Left ventricle myocardium inferior (tissue), 1 donor: ENCODE measurements at regions of chr6 and their contacts with region 1.

Region 1: GRCh38 chr6:13538084-13538483 is 36.3 kb upstream of the SIRT5 start:
- DNase-seq: no peak
- H3K4me3 ChIP-seq: no peak overlapping the region
- H3K27ac ChIP-seq: peak overlapping the region; percentile 65
- H3K4me1 ChIP-seq: peaks cover 24% of the 10 kb centered on the region
- H3K27me3 ChIP-seq: no peaks in the 10 kb centered on the region
- CTCF ChIP-seq: peak; percentile 66

Region 2: GRCh38 chr6:12595161-12595811 is 942.8 kb before region 1 on chr6:
- intact Hi-C with region 1: no loop called
- DNase-seq: no peak
- H3K4me3 ChIP-seq: no peak overlapping the region
- H3K27ac ChIP-seq: no peak overlapping the region
- H3K4me1 ChIP-seq: peaks cover 8% of the 10 kb centered on the region
- H3K27me3 ChIP-seq: no peaks in the 10 kb centered on the region
- CTCF ChIP-seq: no peak

Region 3: DNA sequence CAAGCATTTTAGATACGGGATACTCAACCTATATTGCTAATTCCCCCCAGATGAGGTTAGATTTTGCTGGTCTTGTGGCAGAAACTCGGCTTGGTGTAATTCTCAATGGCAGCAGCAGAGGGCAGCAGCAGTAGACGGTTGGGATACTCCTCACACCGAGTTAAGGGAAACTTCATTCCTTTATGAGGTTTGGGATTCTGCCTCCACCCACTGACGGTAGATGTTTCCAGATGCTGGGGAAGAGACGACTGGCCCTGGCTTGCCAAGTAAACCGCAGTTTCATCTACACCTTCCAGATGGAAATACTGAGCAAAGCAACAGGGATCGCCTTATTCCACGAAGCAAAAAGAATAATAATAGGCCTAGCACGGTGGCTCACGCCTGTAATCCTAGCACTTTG is 201.5 kb before region 1 on chr6:
- intact Hi-C with region 1: loop called (anchors 5 kb)
- DNase-seq: peak; percentile 86
- H3K4me3 ChIP-seq: no peak overlapping the region
- H3K27ac ChIP-seq: no peak overlapping the region
- H3K4me1 ChIP-seq: peaks cover 15% of the 10 kb centered on the region
- H3K27me3 ChIP-seq: no peaks in the 10 kb centered on the region
- CTCF ChIP-seq: peak; percentile 91

Region 4: DNA sequence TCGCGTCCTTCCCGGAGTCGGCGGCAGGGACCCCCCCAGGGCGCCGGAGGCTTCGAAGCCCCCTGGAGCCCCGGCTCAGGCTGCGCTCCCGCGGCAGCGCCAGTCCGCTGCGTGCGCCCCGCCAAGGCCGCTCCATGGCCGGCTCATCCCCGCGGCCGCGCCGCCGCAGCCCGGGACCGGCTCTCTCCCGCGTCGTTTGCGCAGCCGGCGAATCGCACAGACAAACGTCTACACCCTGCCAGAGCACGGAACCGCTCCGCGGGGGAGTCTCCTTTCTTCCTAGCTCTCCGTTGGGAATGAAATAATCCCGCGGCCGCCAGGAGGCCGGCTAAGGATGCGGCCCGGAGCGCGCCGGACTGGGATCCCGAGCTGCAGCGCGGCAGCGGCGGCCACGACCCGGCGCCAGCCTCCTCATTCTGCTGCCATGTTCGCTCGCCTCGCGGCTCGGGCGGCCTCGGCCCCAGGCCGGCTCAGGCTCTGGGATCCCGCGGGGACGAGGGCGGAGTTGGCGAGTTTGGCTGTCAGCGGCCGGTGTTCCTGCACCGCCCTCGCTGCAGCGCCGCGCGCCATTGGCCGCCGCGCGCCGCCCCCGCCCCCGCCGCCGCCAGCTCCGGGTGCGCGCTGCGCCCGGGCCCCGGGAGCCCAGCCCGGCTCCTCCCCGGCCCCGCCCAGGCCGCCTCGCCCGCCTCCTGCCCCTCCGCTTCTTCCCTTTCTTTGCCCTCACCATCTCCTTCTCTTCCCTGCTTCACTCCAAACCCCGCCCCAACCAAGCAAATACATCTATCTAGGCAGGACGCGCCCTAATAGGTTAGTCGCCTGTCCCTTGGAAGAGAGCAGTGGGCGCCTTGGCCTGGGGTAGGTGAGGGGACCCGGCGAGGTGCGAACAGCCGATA is 50.7 kb before region 1 on chr6 and contains the start of gene GFOD1:
- intact Hi-C with region 1: loop called (anchors 5 kb)
- DNase-seq: peak; percentile 92
- H3K4me3 ChIP-seq: peak within 1 kb of the TSS; percentile 93
- H3K27ac ChIP-seq: peak within 1 kb of the TSS; percentile 98
- H3K4me1 ChIP-seq: peaks cover 61% of the 10 kb centered on the region
- H3K27me3 ChIP-seq: no peaks in the 10 kb centered on the region
- CTCF ChIP-seq: peak; percentile 37
- total RNA-seq, gene GFOD1: 51.6 TPM

Region 5: DNA sequence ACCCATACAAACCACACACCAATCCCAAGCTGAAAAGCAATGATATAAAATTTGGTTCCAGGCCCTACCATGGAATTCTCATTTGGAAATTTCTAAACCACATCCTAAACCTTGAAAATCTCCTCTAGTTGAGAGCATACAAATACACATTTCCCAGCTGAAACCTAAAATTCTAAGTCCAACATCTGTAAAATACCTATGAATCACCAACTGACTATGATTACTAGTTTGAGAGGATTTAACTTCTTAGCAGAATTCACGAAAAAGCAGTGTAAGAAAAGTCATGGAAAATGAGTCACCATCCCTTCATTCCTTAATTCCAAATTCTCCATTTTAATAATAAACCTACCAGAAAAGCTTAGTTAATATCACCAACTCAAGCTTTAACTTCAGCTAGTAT is 158.1 kb after region 1 on chr6:
- intact Hi-C with region 1: no loop called
- DNase-seq: no peak
- H3K4me3 ChIP-seq: no peak overlapping the region
- H3K27ac ChIP-seq: no peak overlapping the region
- H3K4me1 ChIP-seq: peaks cover 64% of the 10 kb centered on the region
- H3K27me3 ChIP-seq: no peaks in the 10 kb centered on the region
- CTCF ChIP-seq: no peak

Region 6: DNA sequence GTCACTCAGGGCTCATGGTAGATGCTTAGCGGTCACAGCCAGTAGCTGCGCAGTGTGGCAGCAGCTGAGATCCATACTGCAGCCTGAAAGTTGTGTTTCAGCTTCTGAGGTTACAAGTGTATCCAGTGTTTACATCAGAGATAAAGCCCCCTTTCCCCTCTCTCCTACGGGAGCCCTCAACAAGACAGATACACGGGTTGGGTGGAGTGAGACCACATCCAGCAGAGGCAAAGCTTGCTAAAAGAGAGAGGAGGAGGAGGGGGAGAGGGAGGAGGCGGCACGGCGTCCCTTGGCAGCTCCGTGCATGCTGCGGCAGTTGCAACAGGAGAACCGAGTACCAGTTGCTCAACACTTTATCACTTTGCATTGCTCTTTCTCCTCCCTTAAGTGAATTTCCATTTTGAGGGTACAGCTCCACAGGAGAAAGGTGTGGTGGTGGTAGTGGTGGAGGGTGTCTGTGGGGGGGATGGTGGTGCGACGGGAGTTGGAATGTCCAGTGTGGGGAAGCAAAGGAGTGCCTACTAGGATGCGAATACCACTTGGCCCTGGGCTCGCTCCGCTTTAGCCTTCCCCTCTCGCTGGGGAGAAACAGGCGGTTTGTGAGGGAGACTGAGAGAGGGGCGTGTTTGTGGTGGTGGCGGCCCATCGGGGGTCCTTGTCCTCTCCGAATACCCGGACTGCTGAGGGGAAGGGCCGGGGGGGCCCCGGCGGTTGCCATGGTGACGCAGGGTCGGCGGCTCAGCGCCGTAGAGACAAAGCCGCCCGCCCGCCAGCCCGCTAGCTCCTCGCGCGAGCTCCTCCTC is 386.3 kb after region 1 on chr6:
- intact Hi-C with region 1: no loop called
- DNase-seq: peak; percentile 25
- H3K4me3 ChIP-seq: peak overlapping the region; percentile 61
- H3K27ac ChIP-seq: no peak overlapping the region
- H3K4me1 ChIP-seq: peaks cover 18% of the 10 kb centered on the region
- H3K27me3 ChIP-seq: peaks cover 91% of the 10 kb centered on the region
- CTCF ChIP-seq: no peak